Dorsolateral prefrontal cortex (tissue), 120 donors: ENCODE measurements at regions of chr7 and their contacts with region 1.

Region 1: DNA sequence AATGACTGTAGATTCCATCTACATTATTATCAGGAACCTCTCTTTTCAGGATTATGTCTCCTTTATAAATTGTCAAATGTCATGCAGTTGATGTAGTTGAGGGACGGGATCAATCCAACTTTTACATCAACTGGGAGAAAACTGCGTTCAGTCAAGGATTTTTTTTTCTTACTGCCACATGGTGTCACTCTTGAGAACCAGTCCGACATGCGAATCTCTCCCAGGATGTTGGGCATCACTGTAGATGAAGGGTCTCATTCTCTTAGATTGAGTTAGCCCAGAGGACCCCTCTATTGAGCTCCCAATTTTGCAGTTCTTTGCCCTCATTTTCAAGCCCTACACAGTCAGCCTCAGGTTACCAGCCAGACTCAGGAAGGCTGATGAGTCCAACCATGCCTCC is 120.3 kb upstream of the PTPRZ1 start:
- DNase-seq: no peak
- H3K4me3 ChIP-seq: no peak overlapping the region
- H3K27ac ChIP-seq: no peak overlapping the region
- H3K27me3 ChIP-seq: peaks cover 0 to 66% (median 3%) of the 10 kb centered on the region in 45 donors
- CTCF ChIP-seq: peak in 52 of 56 donors; percentile 18 to 74 (median 48)

Region 2: GRCh38 chr7:121187222-121187621 is 565.5 kb before region 1 on chr7:
- intact Hi-C with region 1: no loop called
- DNase-seq: no peak
- H3K4me3 ChIP-seq: no peak overlapping the region
- H3K27ac ChIP-seq: no peak overlapping the region
- H3K27me3 ChIP-seq: peaks cover 0 to 18% (median 0%) of the 10 kb centered on the region in 45 donors
- CTCF ChIP-seq: no peak

Region 3: DNA sequence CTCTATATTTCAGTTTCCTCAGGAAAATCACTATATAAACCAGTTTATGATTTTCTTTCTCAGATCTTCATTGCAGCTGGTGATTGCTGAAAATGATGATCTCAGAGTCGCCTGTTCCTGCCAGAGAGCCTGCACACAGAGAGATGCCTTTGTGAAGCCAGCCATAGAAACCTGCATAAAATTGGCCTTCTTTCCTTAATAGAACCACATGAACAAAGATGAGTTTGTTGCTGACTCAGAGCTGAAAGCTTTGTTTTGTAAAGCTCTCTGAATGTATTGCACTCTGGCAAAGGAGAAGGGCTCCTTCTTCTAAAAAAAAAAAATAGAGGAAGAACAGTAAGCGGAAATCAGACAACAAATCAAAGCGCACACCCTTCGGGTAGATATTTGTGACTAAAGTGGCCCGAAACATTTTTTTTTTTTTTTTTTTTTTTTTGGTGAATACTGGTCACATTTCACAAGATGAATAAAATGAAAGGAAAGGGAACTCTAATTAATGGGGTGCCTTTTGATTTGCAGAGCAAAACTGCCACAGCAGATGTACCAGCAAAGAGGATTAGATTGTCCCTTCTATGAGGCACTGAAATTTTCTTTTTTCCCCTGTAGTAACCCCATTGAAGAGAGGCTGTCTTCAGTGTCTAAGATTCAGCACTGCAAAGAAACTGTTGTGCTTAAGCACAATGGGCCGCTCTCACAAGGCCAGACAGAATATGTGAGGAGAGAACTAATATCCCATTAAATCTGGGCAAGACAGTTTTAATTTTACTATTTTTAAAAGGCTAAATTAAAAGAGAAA is 45.1 kb after region 1 on chr7:
- intact Hi-C with region 1: loop called in 1 of 2 experiments (anchors 5 kb)
- DNase-seq: peak in 9 of 10 donors; percentile 4 to 80 (median 59)
- H3K4me3 ChIP-seq: peak overlapping the region in 44 of 59 donors; percentile 3 to 55 (median 26)
- H3K27ac ChIP-seq: peak overlapping the region in 55 of 59 donors; percentile 8 to 86 (median 70)
- H3K27me3 ChIP-seq: peaks cover 0 to 24% (median 0%) of the 10 kb centered on the region in 45 donors
- CTCF ChIP-seq: peak in 9 of 56 donors; percentile 10 to 27 (median 16)

Region 4: DNA sequence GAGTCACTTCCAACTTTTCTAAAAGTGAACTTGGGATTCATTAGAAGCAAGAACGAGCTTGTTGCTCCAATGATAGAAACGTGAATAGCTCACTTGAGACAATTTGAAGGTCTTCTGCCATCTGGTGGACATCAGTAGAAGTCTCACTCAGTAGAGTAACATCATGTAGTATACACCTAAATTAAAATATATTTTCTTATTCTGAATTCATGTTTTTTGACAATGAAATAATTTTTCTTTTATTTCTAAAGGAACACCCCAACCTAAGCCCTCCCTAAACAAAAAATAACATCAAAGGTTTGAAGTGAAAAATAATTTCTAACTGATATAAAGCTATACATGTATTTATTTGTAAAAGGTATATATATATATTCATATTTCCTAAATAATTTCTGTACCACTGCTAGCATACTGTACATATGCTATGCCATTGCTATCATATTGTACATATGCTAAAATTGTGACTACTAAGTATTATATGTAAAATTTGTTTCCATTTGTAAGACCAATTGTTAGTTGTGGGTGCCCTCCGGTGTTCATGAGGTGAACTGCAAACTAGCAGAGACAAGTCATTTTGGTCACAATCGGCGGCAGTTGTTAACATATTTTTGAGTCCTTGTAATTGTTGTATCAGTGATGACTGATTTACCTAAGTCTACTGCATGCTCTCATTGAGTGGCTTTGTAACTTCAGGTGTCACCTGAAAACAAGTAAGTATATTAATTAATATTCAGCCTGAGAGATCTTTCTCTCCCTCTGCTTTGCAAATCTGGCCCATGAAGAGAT is 242.1 kb after region 1 on chr7:
- intact Hi-C with region 1: loop called (anchors 2 kb)
- DNase-seq: peak in 9 of 10 donors; percentile 7 to 85 (median 67)
- H3K4me3 ChIP-seq: no peak overlapping the region
- H3K27ac ChIP-seq: no peak overlapping the region
- H3K27me3 ChIP-seq: peaks cover 0 to 8% (median 0%) of the 10 kb centered on the region in 45 donors
- CTCF ChIP-seq: peak; percentile 49 to 85 (median 69)